ENCODE measurements at regions of chr10 and their contacts with region 1.

Region 1: GRCh38 chr10:75210282-75211006 is at the start of gene VDAC2:
- DNase-seq: peak; percentile 92 to 99 (median 96)
- H3K4me3 ChIP-seq: peak within 1 kb of the TSS; percentile 89
- H3K4me3 Mint-ChIP-seq: peak within 1 kb of the TSS; percentile 96 to 100 (median 98)
- H3K27ac ChIP-seq: peak within 1 kb of the TSS; percentile 98
- H3K27ac Mint-ChIP-seq: peak within 1 kb of the TSS; percentile 99 to 100 (median 100)
- H3K4me1 ChIP-seq: peaks cover 25% of the 10 kb centered on the region
- H3K4me1 Mint-ChIP-seq: peaks cover 26 to 39% (median 32%) of the 10 kb centered on the region in 3 donors
- H3K27me3 ChIP-seq: no peaks in the 10 kb centered on the region
- H3K27me3 Mint-ChIP-seq: peaks cover 0 to 2% of the 10 kb centered on the region in 2 donors
- total RNA-seq, gene VDAC2: 247 to 261 TPM

Region 2: DNA sequence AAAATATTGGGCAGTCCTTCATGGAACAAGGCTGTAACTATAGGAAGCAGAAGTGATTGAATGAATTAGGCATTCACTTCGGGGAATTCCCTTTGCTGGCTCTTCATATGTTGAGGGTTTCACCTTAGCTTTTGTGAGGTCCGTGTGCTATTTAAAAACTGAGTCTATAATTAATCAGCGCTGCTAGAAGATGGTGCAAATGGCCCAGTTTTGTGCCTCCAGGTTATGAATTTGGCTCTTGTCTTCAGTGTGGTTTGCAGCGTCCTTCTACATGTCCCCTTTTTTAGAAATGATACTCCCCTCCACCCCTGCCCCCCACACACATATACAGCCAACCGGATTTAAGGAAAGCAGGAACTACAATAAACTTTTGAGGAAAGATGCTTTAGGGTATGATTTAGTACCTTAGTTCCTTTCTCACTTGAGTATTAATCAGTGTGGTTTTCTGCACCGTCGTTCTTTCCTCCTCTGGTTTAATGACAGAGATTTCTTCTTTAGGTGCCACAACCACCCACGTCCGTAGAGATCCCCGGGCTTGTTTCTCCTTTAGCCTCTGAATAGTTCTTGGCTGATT is 209.6 kb before region 1 on chr10:
- CTCF ChIA-PET with region 1: no interaction called
- POLR2A ChIA-PET with region 1: no interaction called
- DNase-seq: no peak
- H3K4me3 ChIP-seq: no peak overlapping the region
- H3K4me3 Mint-ChIP-seq: peak overlapping the region in 2 of 7 donors; percentile 16 to 26
- H3K27ac ChIP-seq: no peak overlapping the region
- H3K27ac Mint-ChIP-seq: peak overlapping the region in 5 of 8 donors; percentile 9 to 75 (median 52)
- H3K4me1 ChIP-seq: no peaks in the 10 kb centered on the region
- H3K4me1 Mint-ChIP-seq: peaks cover 8 to 18% (median 13%) of the 10 kb centered on the region in 3 donors
- H3K27me3 ChIP-seq: no peaks in the 10 kb centered on the region
- H3K27me3 Mint-ChIP-seq: peaks cover 0 to 3% of the 10 kb centered on the region in 2 donors

Region 3: DNA sequence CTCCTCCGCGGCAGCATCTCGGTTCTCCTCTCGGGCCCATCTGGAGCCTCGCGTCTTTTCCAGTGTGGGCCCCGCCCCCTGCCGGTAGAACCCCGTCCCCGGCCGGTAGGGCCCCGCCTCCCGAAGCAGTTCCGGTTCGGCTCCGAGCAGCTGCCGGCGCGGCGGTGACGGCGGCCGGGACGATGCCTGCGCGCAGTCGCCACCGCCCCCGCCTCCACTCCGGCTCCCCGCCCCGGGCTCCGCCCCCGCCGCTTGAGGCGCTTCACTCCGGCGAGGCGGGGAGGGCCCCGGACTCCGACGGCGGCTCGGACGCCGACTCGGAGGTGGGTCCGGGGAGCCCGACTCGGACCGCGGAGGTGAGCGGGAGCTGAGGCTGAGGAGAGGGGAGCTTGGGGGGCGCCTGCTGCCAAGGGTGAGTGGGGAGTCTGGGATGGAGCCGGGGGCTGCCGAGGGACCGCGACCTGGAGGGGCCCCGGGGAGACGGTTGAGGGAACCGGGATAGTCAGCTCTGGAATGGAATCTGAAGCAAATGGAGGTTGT is 99.0 kb before region 1 on chr10 and contains the start of gene SAMD8:
- CTCF ChIA-PET with region 1: interaction called, 5 read pairs
- POLR2A ChIA-PET with region 1: interaction called, 23 read pairs
- DNase-seq: peak; percentile 94 to 97 (median 95)
- H3K4me3 ChIP-seq: peak within 1 kb of the TSS; percentile 90
- H3K4me3 Mint-ChIP-seq: peak within 1 kb of the TSS; percentile 84 to 99 (median 90)
- H3K27ac ChIP-seq: peak within 1 kb of the TSS; percentile 93
- H3K27ac Mint-ChIP-seq: peak within 1 kb of the TSS; percentile 89 to 99 (median 95)
- H3K4me1 ChIP-seq: peaks cover 37% of the 10 kb centered on the region
- H3K4me1 Mint-ChIP-seq: peaks cover 50 to 60% (median 57%) of the 10 kb centered on the region in 3 donors
- H3K27me3 ChIP-seq: no peaks in the 10 kb centered on the region
- H3K27me3 Mint-ChIP-seq: no peaks in the 10 kb centered on the region
- total RNA-seq, gene SAMD8: 15.0 to 16.4 TPM

Region 4: GRCh38 chr10:75229971-75230370 is 19.5 kb after region 1 on chr10:
- CTCF ChIA-PET with region 1: interaction called, 168 read pairs
- POLR2A ChIA-PET with region 1: interaction called, 56 read pairs
- DNase-seq: no peak
- H3K4me3 ChIP-seq: no peak overlapping the region
- H3K4me3 Mint-ChIP-seq: no peak overlapping the region
- H3K27ac ChIP-seq: no peak overlapping the region
- H3K27ac Mint-ChIP-seq: peak overlapping the region in 5 of 8 donors; percentile 75 to 90 (median 88)
- H3K4me1 ChIP-seq: peaks cover 28% of the 10 kb centered on the region
- H3K4me1 Mint-ChIP-seq: peaks cover 27 to 62% (median 28%) of the 10 kb centered on the region in 3 donors
- H3K27me3 ChIP-seq: no peaks in the 10 kb centered on the region
- H3K27me3 Mint-ChIP-seq: no peaks in the 10 kb centered on the region

Region 5: GRCh38 chr10:75235375-75236177 is 25.1 kb after region 1 on chr10 and contains the start of gene COMTD1:
- CTCF ChIA-PET with region 1: interaction called, 168 read pairs
- POLR2A ChIA-PET with region 1: interaction called, 56 read pairs
- DNase-seq: peak; percentile 91 to 95 (median 92)
- H3K4me3 ChIP-seq: peak within 1 kb of the TSS; percentile 75
- H3K4me3 Mint-ChIP-seq: peak within 1 kb of the TSS; percentile 74 to 90 (median 84)
- H3K27ac ChIP-seq: peak within 1 kb of the TSS; percentile 66
- H3K27ac Mint-ChIP-seq: peak within 1 kb of the TSS; percentile 85 to 99 (median 90)
- H3K4me1 ChIP-seq: peaks cover 14% of the 10 kb centered on the region
- H3K4me1 Mint-ChIP-seq: peaks cover 9 to 27% (median 10%) of the 10 kb centered on the region in 3 donors
- H3K27me3 ChIP-seq: no peaks in the 10 kb centered on the region
- H3K27me3 Mint-ChIP-seq: no peaks in the 10 kb centered on the region
- total RNA-seq, gene COMTD1: 43.9 to 47.9 TPM